ENCODE measurements at regions of chr9 and their contacts with region 1.

Region 1: DNA sequence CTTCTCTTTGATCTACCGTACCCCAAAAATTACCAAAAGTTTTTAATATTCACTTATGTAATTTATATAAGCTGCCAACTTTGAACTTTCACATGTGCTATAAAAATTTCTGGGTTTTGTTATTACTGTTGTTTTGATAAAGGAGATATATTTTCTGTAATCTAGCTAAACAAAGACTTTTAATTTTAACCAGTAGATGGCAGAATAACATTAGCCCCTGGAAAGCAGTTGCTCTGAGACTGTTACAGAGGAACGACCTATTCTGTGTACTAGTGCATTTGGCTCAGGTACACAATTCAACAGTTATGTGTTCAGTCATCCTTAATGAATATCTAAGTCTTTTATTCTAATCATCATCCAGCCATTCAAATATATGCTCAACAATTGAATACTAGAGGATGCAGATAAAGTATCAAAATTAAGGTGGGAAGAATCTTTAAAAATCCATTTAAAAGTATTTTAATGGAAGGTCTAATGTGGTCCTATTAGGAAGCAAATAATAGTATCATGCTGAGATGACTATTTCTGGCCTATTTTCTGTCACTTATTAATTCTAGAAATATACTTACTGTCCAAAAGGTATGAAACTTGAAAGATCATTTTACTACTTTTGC is 8.6 kb downstream of the KLHL9 start:
- DNase-seq: peak; percentile 70
- ATAC-seq: peak; percentile 80
- H3K4me3 ChIP-seq: no peak overlapping the region
- H3K4me3 Mint-ChIP-seq: no peak overlapping the region
- H3K27ac ChIP-seq: no peak overlapping the region
- H3K27ac Mint-ChIP-seq: no peak overlapping the region
- H3K4me1 ChIP-seq: peaks cover 2 to 3% of the 10 kb centered on the region in 2 donors
- H3K4me1 Mint-ChIP-seq: peaks cover 26% of the 10 kb centered on the region
- H3K27me3 ChIP-seq: no peaks in the 10 kb centered on the region
- H3K27me3 Mint-ChIP-seq: no peaks in the 10 kb centered on the region
- CTCF ChIP-seq: peak; percentile 90

Region 2: GRCh38 chr9:21252721-21253547 is 73.7 kb before region 1 on chr9:
- CTCF ChIA-PET with region 1: interaction called, 10 read pairs
- POLR2A ChIA-PET with region 1: no interaction called
- intact Hi-C with region 1: no loop called
- DNase-seq: peak; percentile 23
- ATAC-seq: peak; percentile 43
- H3K4me3 ChIP-seq: no peak overlapping the region
- H3K4me3 Mint-ChIP-seq: no peak overlapping the region
- H3K27ac ChIP-seq: no peak overlapping the region
- H3K27ac Mint-ChIP-seq: no peak overlapping the region
- H3K4me1 ChIP-seq: peaks cover 2 to 3% of the 10 kb centered on the region in 2 donors
- H3K4me1 Mint-ChIP-seq: peaks cover 5% of the 10 kb centered on the region
- H3K27me3 ChIP-seq: no peaks in the 10 kb centered on the region
- H3K27me3 Mint-ChIP-seq: peaks cover 45% of the 10 kb centered on the region
- CTCF ChIP-seq: peak; percentile 69

Region 3: GRCh38 chr9:21395778-21396717 is 69.4 kb after region 1 on chr9:
- CTCF ChIA-PET with region 1: interaction called, 159 read pairs
- POLR2A ChIA-PET with region 1: no interaction called
- intact Hi-C with region 1: loop called (anchors 1 kb)
- DNase-seq: peak; percentile 74
- ATAC-seq: peak; percentile 52
- H3K4me3 ChIP-seq: peak overlapping the region in 4 of 5 experiments; percentile 22 to 52 (median 32)
- H3K4me3 Mint-ChIP-seq: peak overlapping the region; percentile 68
- H3K27ac ChIP-seq: no peak overlapping the region
- H3K27ac Mint-ChIP-seq: no peak overlapping the region
- H3K4me1 ChIP-seq: peaks cover 8 to 11% of the 10 kb centered on the region in 2 donors
- H3K4me1 Mint-ChIP-seq: peaks cover 18% of the 10 kb centered on the region
- H3K27me3 ChIP-seq: peaks cover 3 to 57% (median 37%) of the 10 kb centered on the region in 4 experiments
- H3K27me3 Mint-ChIP-seq: peaks cover 69% of the 10 kb centered on the region
- CTCF ChIP-seq: peak; percentile 87

Region 4: DNA sequence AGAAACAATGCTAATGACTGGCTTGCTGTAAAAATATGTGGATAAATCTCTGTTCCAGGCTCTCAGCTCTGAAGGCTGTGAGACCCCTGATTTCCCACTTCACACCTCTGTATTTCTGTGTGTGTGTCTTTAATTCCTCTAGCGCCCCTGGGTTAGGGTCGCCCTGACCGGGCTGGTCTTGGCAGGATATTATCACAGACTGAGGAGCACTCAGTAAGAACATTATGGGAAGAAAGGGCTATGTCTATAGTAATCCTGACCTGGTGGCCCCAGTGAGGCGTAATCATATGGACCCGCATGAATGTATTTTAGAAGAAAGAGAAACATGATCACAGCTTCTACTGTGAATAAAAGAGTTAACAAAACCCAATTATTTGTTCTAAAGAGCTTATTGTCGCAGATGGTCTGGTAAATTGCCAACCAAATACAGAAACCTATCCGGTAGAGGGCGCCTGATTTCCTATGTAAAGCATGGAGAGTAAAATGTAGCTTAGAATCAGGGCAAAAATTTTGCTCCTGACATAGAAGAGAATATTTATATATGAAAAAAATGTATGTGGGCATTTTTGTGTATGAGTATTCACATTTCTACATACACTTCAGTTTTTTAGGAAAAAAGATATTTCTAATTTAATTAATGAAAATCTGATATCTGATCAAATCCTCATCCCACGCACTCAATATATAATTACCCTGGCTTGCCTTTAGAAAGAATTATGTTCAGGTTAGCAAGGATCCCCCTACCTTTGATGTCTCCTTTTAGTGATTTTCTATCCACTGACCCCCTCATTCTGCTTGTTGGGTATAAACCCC is 107.8 kb after region 1 on chr9:
- CTCF ChIA-PET with region 1: interaction called, 19 read pairs
- POLR2A ChIA-PET with region 1: no interaction called
- intact Hi-C with region 1: no loop called
- DNase-seq: peak; percentile 65
- ATAC-seq: no peak
- H3K4me3 ChIP-seq: no peak overlapping the region
- H3K4me3 Mint-ChIP-seq: no peak overlapping the region
- H3K27ac ChIP-seq: no peak overlapping the region
- H3K27ac Mint-ChIP-seq: peak overlapping the region; percentile 57
- H3K4me1 ChIP-seq: peaks cover 5 to 7% of the 10 kb centered on the region in 2 donors
- H3K4me1 Mint-ChIP-seq: peaks cover 14% of the 10 kb centered on the region
- H3K27me3 ChIP-seq: peaks cover 0 to 43% (median 28%) of the 10 kb centered on the region in 4 experiments
- H3K27me3 Mint-ChIP-seq: peaks cover 64% of the 10 kb centered on the region
- CTCF ChIP-seq: peak; percentile 66

Region 5: DNA sequence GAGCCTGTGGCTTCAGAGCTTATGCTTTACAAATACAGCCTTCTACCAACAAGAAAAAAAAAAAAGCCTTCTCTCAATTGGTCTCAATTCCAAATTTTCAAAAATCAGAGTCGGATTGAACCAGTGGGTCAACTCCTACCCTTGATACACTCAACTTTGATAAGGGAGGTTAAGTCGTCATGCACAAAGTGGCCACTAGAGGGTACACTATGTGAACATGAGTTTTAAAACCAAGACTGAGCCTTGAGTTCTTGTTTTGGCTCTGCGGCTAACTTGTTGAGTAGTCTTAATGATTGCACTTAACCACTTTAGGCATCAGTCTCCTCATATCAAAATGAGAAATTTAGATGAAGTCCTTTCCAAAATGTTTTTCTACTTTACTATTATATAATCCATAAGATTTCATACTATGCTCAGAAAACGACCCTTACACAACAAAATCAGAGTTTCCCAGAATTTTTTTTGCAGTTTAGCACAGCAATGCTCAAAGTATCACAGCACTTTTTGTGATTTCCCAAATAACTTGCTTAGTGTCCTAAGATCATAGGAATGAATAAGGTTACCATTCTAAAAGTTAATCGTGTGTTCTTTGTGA is 382.9 kb after region 1 on chr9:
- CTCF ChIA-PET with region 1: interaction called, 20 read pairs
- POLR2A ChIA-PET with region 1: no interaction called
- intact Hi-C with region 1: loop called (anchors 1 kb)
- DNase-seq: peak; percentile 56
- ATAC-seq: peak; percentile 60
- H3K4me3 ChIP-seq: no peak overlapping the region
- H3K4me3 Mint-ChIP-seq: no peak overlapping the region
- H3K27ac ChIP-seq: no peak overlapping the region
- H3K27ac Mint-ChIP-seq: no peak overlapping the region
- H3K4me1 ChIP-seq: no peaks in the 10 kb centered on the region
- H3K4me1 Mint-ChIP-seq: no peaks in the 10 kb centered on the region
- H3K27me3 ChIP-seq: peaks cover 0 to 3% (median 0%) of the 10 kb centered on the region in 4 experiments
- H3K27me3 Mint-ChIP-seq: peaks cover 29% of the 10 kb centered on the region
- CTCF ChIP-seq: peak; percentile 94